ENCODE measurements at regions of chr10 and their contacts with region 1.

Region 1: GRCh38 chr10:50624866-50625692 is 1.3 kb upstream of the SGMS1 start:
- DNase-seq: peak in 1 of 2 donors; percentile 67
- H3K4me3 ChIP-seq: peak overlapping the region; percentile 84 to 85
- H3K27ac ChIP-seq: peak overlapping the region; percentile 100
- H3K4me1 ChIP-seq: peaks cover 0 to 22% (median 12%) of the 10 kb centered on the region in 4 donors
- H3K27me3 ChIP-seq: no peaks in the 10 kb centered on the region
- CTCF ChIP-seq: peak; percentile 65

Region 2: DNA sequence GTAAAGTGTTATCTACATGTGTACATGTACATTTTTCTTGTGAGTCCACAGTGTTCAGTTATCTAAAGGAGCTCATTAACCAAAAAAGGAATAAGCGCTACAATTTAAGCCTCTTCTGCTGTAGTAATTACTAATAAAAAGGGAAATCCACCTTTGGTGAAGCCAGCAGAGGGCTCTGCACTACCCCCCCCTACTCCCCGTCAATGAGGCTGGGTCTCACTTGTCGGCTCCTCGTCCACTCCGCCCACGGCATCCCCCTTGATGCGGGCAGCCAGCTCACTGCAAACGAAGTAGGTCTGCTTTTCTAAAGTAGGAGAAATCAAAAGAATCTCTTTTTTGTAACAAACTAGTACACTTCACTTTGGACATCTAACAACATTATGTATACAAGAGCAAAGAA is 562.0 kb before region 1 on chr10:
- intact Hi-C with region 1: loop called (anchors 10 kb)
- DNase-seq: no peak
- H3K4me3 ChIP-seq: no peak overlapping the region
- H3K27ac ChIP-seq: no peak overlapping the region
- H3K4me1 ChIP-seq: peaks cover 0 to 3% (median 0%) of the 10 kb centered on the region in 4 donors
- H3K27me3 ChIP-seq: no peaks in the 10 kb centered on the region
- CTCF ChIP-seq: no peak

Region 3: DNA sequence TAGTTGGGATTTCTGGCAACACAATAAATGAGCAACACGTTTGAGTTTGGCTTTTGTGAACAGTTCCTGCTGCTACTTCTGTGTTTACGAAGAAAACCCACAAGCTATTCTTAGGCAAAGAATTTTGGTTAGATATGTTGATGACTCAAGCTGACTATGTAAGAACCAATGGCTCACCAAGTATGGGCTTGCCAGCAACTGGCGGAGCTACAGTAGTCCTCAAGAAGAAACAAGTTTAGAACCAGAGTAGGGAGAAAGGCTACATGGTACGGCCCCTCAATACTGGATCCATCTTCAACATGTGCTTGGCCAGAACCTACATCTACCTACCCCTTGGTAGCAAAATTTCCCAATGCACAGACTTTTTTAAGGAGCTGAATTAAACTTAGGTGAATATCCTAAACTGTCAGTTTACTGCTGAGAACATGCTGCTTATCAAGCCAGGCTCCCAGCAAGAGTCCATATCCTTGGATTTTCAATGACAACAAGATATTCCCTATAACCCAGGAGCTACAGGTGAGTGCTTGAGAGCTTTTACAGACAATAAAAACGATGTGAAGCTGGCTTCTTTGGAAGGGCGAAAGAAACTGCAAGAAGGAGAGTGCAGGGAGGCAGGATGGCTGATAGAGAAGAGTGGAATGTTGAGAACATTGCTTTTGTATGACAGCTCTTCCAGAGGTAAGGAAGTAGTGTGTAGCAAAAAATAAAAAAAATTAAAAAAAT is 299.5 kb before region 1 on chr10:
- intact Hi-C with region 1: loop called (anchors 10 kb)
- DNase-seq: peak; percentile 87
- H3K4me3 ChIP-seq: no peak overlapping the region
- H3K27ac ChIP-seq: peak overlapping the region; percentile 67 to 70
- H3K4me1 ChIP-seq: peaks cover 0 to 59% (median 23%) of the 10 kb centered on the region in 4 donors
- H3K27me3 ChIP-seq: no peaks in the 10 kb centered on the region
- CTCF ChIP-seq: no peak

Region 4: DNA sequence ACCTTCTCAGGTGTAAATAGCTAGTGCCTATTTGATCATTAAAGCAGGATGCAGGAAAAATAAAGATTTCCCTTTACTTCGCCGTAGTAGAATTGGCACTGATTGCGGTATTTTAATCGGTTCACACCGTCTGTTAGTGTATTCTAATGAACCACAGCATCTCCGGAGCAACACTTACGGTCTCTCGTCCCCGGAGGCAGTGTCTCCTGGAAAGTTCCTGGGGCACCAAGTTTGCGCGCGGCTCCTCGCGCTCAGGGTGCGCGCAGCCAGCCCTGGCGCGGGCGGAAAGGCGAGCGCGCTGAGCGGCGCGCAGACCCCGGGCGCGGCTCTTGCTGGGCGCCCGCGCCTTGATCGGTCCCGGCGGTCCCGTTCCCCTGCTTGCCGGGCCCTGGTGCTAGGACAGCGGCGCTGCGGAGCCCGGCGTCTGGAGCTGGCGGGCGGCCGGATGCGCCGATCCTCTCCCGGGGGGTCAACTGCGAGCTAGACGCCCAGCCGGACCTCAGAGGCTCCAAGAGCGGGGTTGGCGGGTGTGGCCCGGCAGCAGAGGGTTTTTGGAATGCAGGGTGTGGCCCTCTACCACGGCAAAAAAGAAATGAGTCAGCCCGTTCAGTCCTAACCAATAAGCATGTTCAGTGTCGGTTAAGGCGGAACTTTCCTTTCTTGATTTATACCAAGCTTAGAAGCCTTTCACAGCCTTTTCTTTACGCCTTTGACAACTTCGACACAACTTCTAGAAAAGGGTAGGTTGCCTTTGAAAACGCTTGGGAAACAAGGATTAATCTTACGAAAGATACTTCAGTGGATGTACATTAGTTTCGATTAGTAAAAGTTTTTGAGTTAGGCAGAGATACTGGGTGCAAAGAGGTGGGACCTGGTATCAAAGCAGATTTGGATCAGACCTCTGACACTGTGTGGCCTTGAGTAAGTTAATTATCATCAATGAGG is 206.9 kb before region 1 on chr10:
- intact Hi-C with region 1: loop called (anchors 5 kb)
- DNase-seq: peak; percentile 60 to 74
- H3K4me3 ChIP-seq: peak overlapping the region; percentile 75 to 81
- H3K27ac ChIP-seq: peak overlapping the region; percentile 70 to 75
- H3K4me1 ChIP-seq: peaks cover 0 to 25% (median 5%) of the 10 kb centered on the region in 4 donors
- H3K27me3 ChIP-seq: no peaks in the 10 kb centered on the region
- CTCF ChIP-seq: no peak

Region 5: GRCh38 chr10:50552771-50553535 is 72.1 kb before region 1 on chr10:
- intact Hi-C with region 1: loop called (anchors 5 kb)
- DNase-seq: no peak
- H3K4me3 ChIP-seq: no peak overlapping the region
- H3K27ac ChIP-seq: peak overlapping the region; percentile 25 to 35
- H3K4me1 ChIP-seq: peaks cover 0 to 54% (median 44%) of the 10 kb centered on the region in 4 donors
- H3K27me3 ChIP-seq: no peaks in the 10 kb centered on the region
- CTCF ChIP-seq: peak; percentile 16 to 30

Region 6: DNA sequence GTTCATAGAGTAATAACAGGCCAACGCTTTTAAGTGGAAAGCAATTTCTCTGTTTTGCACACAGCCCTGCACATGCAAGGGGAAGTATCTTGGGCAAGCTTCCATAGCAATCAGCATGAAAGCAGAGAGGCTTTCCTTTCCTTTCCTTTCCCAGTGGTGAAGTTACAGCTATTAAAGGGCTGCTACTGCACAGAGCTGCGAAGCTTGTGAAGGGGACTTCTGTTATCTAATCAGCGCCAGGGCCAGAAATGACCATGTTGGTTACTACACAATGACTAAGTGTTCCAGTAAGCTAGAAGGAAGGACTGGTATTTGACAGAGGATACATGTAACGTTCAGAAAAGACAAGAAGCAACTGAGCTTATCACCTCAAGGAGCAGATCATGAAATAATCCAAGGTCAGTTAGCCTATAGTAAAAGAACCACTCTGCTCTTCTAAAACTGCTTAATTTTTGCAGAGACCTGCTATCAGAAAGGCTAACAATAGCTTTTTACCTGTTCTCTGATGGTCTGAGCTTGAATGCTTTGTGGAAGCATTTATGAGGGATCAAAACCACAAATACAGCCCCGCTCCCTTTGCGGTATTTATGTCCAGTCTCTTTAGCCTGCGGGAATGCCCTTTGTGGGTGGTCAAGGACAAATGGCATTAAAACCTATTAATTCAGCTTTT is 47.3 kb before region 1 on chr10:
- intact Hi-C with region 1: no loop called
- DNase-seq: no peak
- H3K4me3 ChIP-seq: no peak overlapping the region
- H3K27ac ChIP-seq: no peak overlapping the region
- H3K4me1 ChIP-seq: peaks cover 0 to 34% (median 26%) of the 10 kb centered on the region in 4 donors
- H3K27me3 ChIP-seq: no peaks in the 10 kb centered on the region
- CTCF ChIP-seq: no peak

Measured in tibial artery (tissue), 4 donors.